ENCODE measurements at regions of chr21 and their contacts with region 1.

Region 1: DNA sequence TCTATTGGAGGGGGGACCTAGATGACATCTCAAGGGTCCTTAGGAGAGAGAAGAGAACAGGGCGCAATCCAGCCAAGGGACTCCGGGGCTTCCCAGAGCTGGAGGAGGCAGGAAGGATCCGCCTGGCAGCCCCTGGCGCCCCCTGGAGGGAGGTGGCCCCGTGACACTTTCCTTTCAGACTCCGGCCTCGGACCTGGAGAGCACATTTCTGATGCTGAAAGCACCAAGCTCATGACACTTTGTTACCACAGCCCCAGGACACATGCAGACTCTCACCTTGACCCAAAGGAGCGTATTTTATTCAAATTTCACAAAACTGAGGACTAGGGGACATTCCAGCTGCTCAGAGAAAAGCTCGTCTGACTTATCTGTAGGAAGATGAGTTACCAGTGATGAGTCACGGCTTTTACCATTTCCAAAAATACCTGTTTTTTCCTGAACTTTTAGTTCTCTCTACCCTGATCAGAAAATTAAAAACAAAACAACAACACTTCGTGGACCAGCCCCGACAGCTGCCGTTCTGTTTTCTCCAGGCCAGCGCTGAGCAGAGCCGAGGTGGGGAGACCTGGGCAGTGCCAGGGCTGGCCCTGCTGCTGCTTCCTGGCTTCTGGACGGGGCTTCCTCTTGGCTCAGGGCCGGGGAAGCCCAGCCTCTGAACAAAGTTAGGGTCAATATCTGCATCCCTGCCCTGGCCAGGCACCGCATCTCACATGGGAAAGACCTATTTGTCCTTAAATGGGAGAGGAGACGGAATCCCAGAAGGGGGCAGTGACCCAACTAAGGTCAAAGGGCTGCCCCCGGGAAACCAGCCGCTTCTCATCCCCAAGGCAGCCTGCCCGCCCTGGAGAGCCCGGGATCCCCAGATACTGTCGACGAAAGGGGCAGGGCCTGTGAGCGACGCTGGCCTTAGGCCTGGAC is 21.6 kb upstream of the POFUT2 start:
- DNase-seq: peak; percentile 89
- ATAC-seq: peak; percentile 89
- H3K4me3 Mint-ChIP-seq: no peak overlapping the region
- H3K27ac Mint-ChIP-seq: peak overlapping the region; percentile 39; the same call in 1 of the 2 replicates
- H3K4me1 Mint-ChIP-seq: peaks cover 6% of the 10 kb centered on the region; the same call in 1 of the 2 replicates
- H3K27me3 Mint-ChIP-seq: peaks cover 7% of the 10 kb centered on the region
- CTCF ChIP-seq: peak; percentile 64

Region 2: DNA sequence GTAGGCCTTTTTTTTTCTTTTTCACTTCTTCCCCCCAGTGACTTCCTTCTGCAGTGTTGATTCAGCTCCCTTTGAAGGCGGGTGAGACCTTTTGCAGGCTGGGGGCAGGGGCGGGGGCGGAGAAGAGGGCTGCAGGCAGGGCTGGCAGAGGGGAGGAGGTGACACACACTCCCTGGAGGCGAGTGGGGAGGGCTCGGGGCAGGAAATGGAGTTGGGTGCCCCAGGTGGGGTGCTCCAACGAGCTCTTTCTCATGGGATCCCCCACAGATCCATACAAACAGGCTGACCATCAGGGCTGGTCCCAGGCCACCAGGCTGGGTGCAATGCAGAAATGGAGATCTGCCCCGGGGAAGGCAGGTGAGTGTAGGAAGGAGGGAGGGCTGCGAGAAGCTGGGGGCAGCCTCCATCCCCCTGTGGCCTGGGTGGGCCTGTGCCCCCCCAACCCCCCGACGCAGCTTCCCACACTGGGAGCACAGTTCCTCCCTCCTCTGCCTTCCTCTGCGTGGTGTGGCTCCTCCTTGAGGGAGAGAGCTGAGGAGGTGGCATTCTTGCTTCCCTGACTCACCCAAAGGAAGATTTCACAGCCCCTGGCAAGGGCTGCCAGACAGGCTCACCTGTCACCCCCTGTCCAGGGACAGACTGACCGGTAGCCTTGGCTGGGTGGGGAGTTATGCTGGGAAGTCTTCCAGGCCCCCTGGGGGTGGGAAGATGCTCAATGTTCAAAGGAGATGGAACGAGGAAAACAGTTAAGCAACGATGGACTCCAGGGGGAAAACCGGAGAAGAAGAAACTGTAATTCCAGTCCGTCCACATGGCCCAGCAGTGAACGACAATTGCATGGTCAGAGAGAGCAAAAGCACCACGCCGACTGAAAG is 381.5 kb before region 1 on chr21:
- CTCF ChIA-PET with region 1: no interaction called
- POLR2A ChIA-PET with region 1: no interaction called
- DNase-seq: no peak
- ATAC-seq: peak; percentile 36
- H3K4me3 Mint-ChIP-seq: no peak overlapping the region
- H3K27ac Mint-ChIP-seq: no peak overlapping the region; the same call in 1 of the 2 replicates
- H3K4me1 Mint-ChIP-seq: peaks cover 41% of the 10 kb centered on the region
- H3K27me3 Mint-ChIP-seq: peaks cover 56% of the 10 kb centered on the region
- CTCF ChIP-seq: no peak

Region 3: GRCh38 chr21:45277101-45278045 is 32.0 kb before region 1 on chr21:
- CTCF ChIA-PET with region 1: no interaction called
- POLR2A ChIA-PET with region 1: no interaction called
- DNase-seq: peak; percentile 6
- ATAC-seq: no peak
- H3K4me3 Mint-ChIP-seq: no peak overlapping the region
- H3K27ac Mint-ChIP-seq: no peak overlapping the region
- H3K4me1 Mint-ChIP-seq: no peaks in the 10 kb centered on the region
- H3K27me3 Mint-ChIP-seq: no peaks in the 10 kb centered on the region
- CTCF ChIP-seq: no peak

Region 4: DNA sequence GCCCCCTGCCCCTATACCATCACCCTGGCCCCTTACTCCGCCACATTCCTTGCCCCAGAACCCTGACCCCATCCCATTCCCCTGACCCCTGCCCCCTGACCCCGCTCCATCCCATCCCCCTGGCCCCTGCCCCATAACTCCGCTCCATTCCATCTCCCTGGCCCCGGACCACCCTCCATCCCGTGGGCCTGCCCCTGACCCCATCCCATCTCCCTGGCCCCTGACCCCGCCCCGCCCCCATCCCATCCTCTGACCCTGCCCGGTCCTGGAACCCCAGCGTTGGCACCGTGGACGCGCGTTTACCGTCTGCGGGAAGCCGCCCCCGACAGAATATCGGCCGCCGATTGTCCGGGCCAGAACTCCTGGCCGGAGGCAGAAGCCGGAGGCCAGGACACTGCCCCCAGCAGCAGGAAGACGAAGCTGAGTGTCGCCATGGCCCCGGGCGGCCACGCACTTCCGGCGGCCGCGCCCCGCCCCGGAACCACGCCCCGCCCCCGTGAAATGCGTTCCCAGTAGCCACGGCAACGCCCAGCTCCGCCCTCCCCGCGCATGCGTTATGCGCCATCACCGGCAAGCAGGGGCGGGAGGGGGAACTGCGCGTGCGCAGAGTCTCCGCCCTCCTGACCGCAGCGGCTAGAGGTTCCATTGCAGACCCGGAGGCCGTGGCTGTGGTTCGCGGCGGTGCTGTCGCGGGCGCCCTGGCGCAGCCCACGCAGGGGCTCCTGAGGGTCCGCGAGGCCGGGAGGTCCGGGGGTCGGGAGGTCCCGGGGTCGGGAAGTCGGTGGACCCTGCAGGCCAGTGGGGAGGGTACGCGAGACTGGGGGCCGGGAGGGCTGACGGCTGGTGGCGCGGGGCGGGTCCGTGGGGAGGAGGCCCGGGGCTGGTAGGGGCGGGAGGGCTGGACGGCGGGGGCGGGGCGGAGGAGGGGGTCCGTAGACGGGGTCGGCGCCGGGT is 21.6 kb before region 1 on chr21 and contains the start of gene POFUT2:
- CTCF ChIA-PET with region 1: interaction called, 47 read pairs
- POLR2A ChIA-PET with region 1: interaction called, 4 read pairs
- DNase-seq: peak; percentile 98
- ATAC-seq: peak; percentile 56
- H3K4me3 Mint-ChIP-seq: peak within 1 kb of the TSS; percentile 74
- H3K27ac Mint-ChIP-seq: peak within 1 kb of the TSS; percentile 36; the same call in 1 of the 2 replicates
- H3K4me1 Mint-ChIP-seq: peaks cover 4% of the 10 kb centered on the region
- H3K27me3 Mint-ChIP-seq: no peaks in the 10 kb centered on the region
- CTCF ChIP-seq: no peak
- total RNA-seq, gene POFUT2: 37.1 to 41.4 TPM (median 39.7 TPM) in 3 replicates

Region 5: DNA sequence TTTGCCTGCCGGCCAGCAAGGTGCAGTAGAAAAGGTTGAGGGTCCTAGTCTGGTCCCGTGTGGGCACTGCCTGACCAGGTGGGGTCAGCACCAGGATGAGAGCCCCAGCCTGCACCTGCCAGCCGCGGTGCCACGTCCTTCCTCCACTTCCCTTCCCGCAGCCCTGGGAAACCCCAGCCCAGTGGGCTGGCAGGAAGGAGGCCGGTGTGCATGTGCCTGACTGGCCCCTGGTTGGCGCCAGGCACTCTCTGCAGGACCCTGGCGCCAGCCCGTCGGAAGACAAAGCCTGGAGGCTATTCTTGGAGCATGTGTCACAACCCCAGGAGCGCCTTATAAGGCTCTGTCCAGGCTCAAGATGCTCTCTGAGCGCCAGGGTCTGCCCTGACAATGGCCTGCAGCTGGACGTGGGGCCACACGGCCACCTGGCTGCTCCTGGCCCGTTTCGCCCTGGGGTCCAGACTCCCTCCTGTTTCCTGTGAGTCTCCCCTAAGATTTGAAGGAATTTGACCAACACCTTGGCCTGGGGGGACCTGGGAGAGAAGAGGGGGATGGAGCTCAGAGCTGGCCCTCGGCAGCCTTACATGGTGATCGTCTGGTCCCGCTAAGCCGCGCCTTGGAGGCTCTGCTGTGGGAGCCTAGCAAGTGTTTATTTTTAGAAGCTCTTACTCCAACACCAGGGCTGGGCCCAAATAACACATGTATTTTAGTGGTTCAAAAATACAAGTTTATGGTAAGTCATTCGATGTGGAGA is 10.3 kb after region 1 on chr21:
- CTCF ChIA-PET with region 1: interaction called, 31 read pairs
- POLR2A ChIA-PET with region 1: interaction called, 4 read pairs
- DNase-seq: no peak
- ATAC-seq: no peak
- H3K4me3 Mint-ChIP-seq: no peak overlapping the region
- H3K27ac Mint-ChIP-seq: no peak overlapping the region
- H3K4me1 Mint-ChIP-seq: peaks cover 11% of the 10 kb centered on the region
- H3K27me3 Mint-ChIP-seq: no peaks in the 10 kb centered on the region; the same call in 1 of the 2 replicates
- CTCF ChIP-seq: no peak

Region 6: DNA sequence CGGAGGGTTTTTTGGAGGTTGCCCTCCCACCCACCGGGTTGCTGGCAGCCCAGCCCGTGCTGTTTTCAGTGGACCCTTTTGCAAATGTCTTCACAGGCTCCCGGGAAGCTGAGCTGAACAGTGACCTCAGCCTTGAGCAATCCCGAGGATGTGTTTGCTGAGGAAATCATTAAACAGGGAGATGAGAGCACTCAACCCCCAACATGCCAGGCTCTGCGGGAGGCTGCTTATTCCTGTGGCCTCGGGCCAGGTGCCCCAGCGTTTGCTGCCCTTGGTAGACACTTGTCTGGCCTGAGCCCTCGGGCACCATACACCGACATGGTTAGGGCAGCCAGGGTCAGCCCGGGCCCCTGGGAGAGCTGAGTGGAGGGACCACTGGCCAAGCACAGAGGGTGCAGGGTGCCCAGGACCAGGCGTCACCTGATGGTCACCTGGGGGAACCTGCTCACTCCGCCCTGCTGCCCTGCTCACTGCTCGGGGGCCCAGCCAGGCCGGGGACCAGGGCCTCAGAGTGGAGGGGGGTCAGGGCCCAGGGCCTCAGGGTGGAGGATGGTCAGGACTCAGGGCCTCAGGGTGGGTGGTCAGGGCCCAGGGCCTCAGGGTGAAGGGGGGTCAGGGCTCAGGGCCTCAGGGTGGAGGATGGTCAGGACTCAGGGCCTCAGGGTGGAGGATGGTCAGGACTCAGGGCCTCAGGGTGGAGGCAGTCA is 20.9 kb after region 1 on chr21:
- CTCF ChIA-PET with region 1: interaction called, 31 read pairs
- POLR2A ChIA-PET with region 1: no interaction called
- DNase-seq: no peak
- ATAC-seq: peak; percentile 46
- H3K4me3 Mint-ChIP-seq: no peak overlapping the region
- H3K27ac Mint-ChIP-seq: peak overlapping the region; percentile 76; the same call in 1 of the 2 replicates
- H3K4me1 Mint-ChIP-seq: peaks cover 25% of the 10 kb centered on the region
- H3K27me3 Mint-ChIP-seq: no peaks in the 10 kb centered on the region; the same call in 1 of the 2 replicates
- CTCF ChIP-seq: no peak

Region 7: DNA sequence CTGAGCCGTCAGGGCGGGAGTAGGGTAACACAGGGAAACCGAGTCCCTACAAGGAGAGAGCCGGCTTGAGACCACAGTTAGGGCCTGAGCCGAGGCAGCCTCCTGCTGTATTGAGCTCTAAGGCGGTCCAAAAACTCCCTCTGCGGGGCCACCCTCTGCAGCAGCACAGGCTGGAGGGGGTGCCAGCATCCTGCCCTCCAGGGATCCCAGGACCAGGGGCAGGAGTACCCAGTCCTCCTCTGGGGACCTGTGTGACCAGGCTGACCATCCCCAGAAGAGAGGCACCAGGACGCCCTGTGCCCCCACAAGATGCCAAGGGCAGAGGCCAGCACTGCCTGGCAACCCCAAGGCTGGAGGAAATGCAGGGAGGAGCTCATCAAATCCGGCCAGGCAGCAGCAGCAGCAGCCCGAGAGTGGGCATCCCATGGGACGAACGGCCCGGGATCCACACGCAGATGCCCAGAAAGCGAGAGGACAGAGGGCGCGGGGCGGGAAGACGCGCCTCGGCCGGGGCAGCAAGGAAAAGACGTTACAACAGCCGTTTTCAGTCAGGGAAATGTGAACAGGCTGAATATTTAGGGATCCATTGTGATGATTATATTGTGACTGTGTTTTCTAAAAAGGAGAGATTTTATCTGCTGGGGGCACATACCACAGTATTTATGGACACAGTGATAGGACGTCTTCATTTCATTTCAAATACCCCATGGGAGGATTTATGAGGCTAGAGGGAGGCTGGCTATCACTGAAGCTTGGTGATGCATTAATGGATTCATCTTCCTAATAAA is 38.6 kb after region 1 on chr21:
- CTCF ChIA-PET with region 1: interaction called, 13 read pairs
- POLR2A ChIA-PET with region 1: no interaction called
- DNase-seq: no peak
- ATAC-seq: peak; percentile 17; the same call in 1 of the 2 replicates
- H3K4me3 Mint-ChIP-seq: no peak overlapping the region
- H3K27ac Mint-ChIP-seq: no peak overlapping the region
- H3K4me1 Mint-ChIP-seq: no peaks in the 10 kb centered on the region
- H3K27me3 Mint-ChIP-seq: peaks cover 9% of the 10 kb centered on the region
- CTCF ChIP-seq: no peak

Region 8: DNA sequence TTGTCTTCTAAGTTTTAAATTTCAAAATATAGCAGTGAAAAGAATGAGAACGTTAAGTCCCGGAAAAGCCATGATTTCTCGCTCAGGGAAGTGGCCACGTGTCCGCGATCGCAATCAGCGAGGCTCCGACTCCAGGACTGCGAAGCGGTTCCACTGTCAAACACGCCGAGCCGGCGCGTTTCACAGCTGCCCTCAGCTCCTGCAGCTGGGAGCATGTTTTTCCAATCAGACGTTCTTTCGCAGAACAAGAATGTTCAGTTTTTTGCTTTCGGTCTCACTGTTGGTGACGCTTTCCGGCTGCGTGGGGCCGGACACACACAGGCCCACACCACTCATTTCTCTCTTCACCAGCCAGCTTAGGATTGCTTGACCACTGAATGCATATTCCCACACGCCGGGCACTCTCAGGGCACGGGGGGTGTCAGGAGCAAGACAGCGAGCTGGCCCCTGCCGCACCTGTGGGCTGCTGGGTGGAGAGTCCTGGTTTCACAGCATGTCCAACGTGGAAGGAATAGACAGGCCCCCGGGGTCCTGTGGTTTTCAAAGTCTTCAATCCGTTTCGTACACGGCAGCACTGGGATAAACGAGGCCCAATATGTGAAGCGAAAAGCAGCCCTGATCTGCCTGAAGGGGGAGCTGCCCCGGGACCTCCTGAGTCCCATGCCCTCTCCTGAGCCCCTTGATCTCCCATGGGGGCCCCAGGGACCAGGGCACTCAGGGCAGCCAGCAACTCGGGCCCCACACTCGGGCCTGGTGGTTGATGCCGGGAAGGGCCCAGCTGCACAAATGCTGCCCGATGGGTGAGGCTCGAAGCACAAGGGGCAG is 48.3 kb after region 1 on chr21:
- CTCF ChIA-PET with region 1: interaction called, 25 read pairs
- POLR2A ChIA-PET with region 1: no interaction called
- DNase-seq: no peak
- ATAC-seq: peak; percentile 38
- H3K4me3 Mint-ChIP-seq: no peak overlapping the region
- H3K27ac Mint-ChIP-seq: no peak overlapping the region; the same call in 1 of the 2 replicates
- H3K4me1 Mint-ChIP-seq: peaks cover 35% of the 10 kb centered on the region
- H3K27me3 Mint-ChIP-seq: no peaks in the 10 kb centered on the region
- CTCF ChIP-seq: no peak

Region 9: DNA sequence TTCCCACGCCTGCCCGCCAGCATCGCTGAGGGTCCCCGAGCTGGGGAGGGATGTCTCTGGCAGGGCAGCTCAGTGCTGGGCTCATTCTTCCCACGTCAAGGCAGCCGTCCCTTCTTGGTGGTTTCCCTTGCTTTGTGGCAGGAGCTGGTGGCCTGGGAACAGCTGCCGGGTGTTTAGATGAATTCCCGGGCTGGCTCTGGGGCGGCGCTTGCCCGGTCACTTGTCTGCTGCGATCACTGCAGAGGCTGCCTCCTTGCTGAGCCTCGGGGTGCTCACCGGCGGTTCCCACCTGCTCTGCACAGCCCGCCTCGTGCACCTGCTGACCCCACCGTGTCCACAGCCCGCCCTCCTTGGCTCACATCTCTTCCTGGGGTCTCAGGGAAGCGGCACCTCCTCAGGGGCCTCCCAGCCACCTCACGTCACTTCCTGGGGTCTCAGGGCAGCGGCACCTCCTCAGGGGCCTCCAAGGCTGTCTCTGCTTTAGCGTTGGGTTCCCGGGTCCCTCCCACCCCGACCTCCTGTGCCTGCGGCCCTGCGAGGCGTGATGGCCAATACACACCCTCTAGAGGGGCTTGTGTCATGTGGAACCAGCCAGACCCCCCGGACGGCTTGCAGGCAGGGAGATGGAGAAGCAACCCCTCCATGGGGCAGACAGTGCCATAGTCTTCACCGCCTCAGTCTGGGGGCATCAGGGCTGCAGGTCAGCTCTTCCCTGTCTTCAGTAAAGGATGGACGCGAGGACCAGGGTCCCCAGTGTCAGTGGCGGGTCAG is 109.2 kb after region 1 on chr21:
- CTCF ChIA-PET with region 1: interaction called, 10 read pairs
- POLR2A ChIA-PET with region 1: no interaction called
- DNase-seq: peak; percentile 9
- ATAC-seq: no peak
- H3K4me3 Mint-ChIP-seq: no peak overlapping the region
- H3K27ac Mint-ChIP-seq: peak overlapping the region; percentile 87
- H3K4me1 Mint-ChIP-seq: peaks cover 47% of the 10 kb centered on the region
- H3K27me3 Mint-ChIP-seq: no peaks in the 10 kb centered on the region
- CTCF ChIP-seq: no peak

Region 10: DNA sequence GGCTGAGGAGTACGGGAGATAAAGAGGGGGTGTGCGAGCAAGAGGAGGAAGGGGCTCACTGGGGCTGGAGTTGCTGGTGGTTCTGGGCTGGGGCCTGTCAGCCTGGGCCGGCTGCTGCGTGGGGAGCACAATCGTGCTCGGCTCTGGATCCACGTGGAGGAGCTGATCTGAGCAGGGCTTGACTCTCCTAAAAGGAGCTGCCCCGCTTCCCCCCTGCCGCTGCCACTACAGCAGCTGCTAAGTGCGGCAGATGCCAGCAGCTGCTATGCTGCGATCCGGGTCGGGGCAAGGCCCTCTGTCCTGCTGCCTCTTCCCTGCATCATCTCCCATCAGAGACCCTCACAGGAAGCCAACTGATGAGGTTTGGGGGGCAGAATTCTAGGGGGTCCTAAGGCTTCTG is 500.1 kb after region 1 on chr21:
- CTCF ChIA-PET with region 1: no interaction called
- POLR2A ChIA-PET with region 1: no interaction called
- DNase-seq: no peak
- ATAC-seq: no peak
- H3K4me3 Mint-ChIP-seq: no peak overlapping the region
- H3K27ac Mint-ChIP-seq: no peak overlapping the region
- H3K4me1 Mint-ChIP-seq: no peaks in the 10 kb centered on the region
- H3K27me3 Mint-ChIP-seq: no peaks in the 10 kb centered on the region; the same call in 1 of the 2 replicates
- CTCF ChIP-seq: no peak

Measured in WTC11 (cell line).